Endothelial cell of umbilical vein (primary cell): ENCODE measurements at regions of chr6 and their contacts with region 1.

Region 1: GRCh38 chr6:5471044-5471443 is 209.7 kb downstream of the FARS2 start:
- DNase-seq: peak; percentile 66
- H3K4me3 ChIP-seq: no peak overlapping the region
- H3K27ac ChIP-seq: no peak overlapping the region
- H3K4me1 ChIP-seq: peaks cover 6% of the 10 kb centered on the region
- H3K27me3 ChIP-seq: no peaks in the 10 kb centered on the region
- CTCF ChIP-seq: peak; percentile 87 to 91
- POLR2A ChIP-seq: no peak

Region 2: GRCh38 chr6:5486214-5486613 is 15.2 kb after region 1 on chr6:
- CTCF ChIA-PET with region 1: interaction called, 44 read pairs
- POLR2A ChIA-PET with region 1: no interaction called
- dilution Hi-C with region 1: no loop called
- intact Hi-C with region 1: no loop called
- DNase-seq: no peak
- H3K4me3 ChIP-seq: no peak overlapping the region
- H3K27ac ChIP-seq: no peak overlapping the region
- H3K4me1 ChIP-seq: no peaks in the 10 kb centered on the region
- H3K27me3 ChIP-seq: no peaks in the 10 kb centered on the region
- CTCF ChIP-seq: no peak
- POLR2A ChIP-seq: no peak

Region 3: DNA sequence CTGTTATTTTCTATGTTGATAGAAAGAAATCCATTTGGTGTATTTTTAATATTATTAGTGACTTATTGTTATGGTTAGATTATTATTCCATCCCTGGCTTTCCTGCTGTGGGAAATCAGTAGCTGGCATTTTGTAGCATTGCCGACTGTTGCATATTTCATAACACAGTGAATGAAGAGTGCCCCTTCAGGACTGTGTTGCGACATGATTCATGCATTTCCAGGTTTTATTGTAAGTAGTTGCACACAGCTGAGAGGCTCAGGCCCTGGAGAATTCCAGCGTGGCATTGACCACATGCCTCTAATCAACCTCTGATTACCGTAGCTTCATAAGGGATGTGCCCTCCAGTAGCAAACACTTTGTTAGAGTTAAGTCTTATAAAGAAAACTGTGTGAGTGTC is 54.2 kb after region 1 on chr6:
- CTCF ChIA-PET with region 1: interaction called, 10 read pairs
- POLR2A ChIA-PET with region 1: no interaction called
- dilution Hi-C with region 1: no loop called
- intact Hi-C with region 1: no loop called
- DNase-seq: peak; percentile 7
- H3K4me3 ChIP-seq: no peak overlapping the region
- H3K27ac ChIP-seq: no peak overlapping the region
- H3K4me1 ChIP-seq: no peaks in the 10 kb centered on the region
- H3K27me3 ChIP-seq: no peaks in the 10 kb centered on the region
- CTCF ChIP-seq: no peak
- POLR2A ChIP-seq: no peak

Region 4: GRCh38 chr6:5764401-5764955 is 293.4 kb after region 1 on chr6:
- CTCF ChIA-PET with region 1: interaction called, 34 read pairs
- POLR2A ChIA-PET with region 1: no interaction called
- dilution Hi-C with region 1: no loop called
- intact Hi-C with region 1: loop called (anchors 1 kb)
- DNase-seq: no peak
- H3K4me3 ChIP-seq: no peak overlapping the region
- H3K27ac ChIP-seq: no peak overlapping the region
- H3K4me1 ChIP-seq: no peaks in the 10 kb centered on the region
- H3K27me3 ChIP-seq: no peaks in the 10 kb centered on the region
- CTCF ChIP-seq: no peak
- POLR2A ChIP-seq: no peak

Region 5: DNA sequence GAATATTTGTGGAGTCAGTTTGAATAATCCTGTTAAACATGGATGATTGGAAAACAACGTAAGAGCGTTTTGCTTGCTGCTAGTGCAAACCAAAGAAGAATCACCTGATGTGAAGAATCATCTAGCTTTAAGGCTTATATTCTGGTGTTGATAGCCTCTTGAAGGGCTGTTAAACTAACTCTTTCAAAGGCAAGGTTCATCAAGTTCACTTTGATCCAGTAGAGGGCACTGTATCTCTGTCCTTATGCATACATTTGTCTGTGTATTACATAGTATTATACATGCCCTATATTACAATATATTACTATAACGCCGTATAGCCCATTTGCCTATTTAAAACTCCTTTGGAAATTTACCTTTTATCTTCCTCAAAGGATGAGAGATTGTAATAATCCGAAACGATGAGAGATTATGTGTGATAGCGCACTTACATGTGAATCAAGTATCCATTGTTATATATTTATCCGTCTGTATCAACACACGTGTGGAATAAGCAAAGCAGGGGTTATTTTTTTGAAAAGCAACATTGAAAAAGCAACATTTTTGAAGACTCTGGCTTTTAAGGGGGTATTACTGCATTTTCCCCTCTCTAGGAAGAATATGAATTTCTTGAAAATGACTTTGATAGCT is 586.5 kb after region 1 on chr6:
- CTCF ChIA-PET with region 1: interaction called, 13 read pairs
- POLR2A ChIA-PET with region 1: no interaction called
- dilution Hi-C with region 1: no loop called
- intact Hi-C with region 1: loop called (anchors 1 kb)
- DNase-seq: peak; percentile 57
- H3K4me3 ChIP-seq: no peak overlapping the region
- H3K27ac ChIP-seq: no peak overlapping the region
- H3K4me1 ChIP-seq: no peaks in the 10 kb centered on the region
- H3K27me3 ChIP-seq: no peaks in the 10 kb centered on the region
- CTCF ChIP-seq: peak; percentile 34 to 50
- POLR2A ChIP-seq: no peak